ENCODE measurements at regions of chr13 and their contacts with region 1.

Region 1: GRCh38 chr13:73765651-73766384 is 368.4 kb downstream of the KLF12 start:
- DNase-seq: peak; percentile 85
- H3K4me3 Mint-ChIP-seq: peak overlapping the region; percentile 69
- H3K27ac Mint-ChIP-seq: peak overlapping the region; percentile 92
- H3K4me1 Mint-ChIP-seq: peaks cover 66% of the 10 kb centered on the region
- H3K27me3 Mint-ChIP-seq: no peaks in the 10 kb centered on the region

Region 2: DNA sequence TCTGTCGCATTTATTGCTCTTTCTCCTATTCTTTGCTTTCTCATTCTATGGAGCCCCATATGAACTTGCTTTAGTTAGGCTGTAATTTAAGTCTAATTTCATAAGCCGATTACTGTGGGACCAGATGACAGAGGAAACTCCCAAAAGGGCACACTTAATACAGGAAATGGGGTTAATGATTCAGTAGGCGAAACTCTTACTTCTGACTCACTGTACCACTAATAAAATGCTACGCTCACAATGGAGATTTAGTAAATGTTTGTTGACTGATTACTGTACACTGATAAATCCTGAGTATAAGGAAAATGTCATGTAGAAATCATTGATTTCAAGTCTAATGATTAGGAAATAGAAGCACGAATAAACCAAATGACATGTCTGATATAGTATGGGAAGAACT is 430.6 kb before region 1 on chr13:
- CTCF ChIA-PET with region 1: no interaction called
- POLR2A ChIA-PET with region 1: no interaction called
- intact Hi-C with region 1: loop called (anchors 5 kb)
- DNase-seq: no peak
- H3K4me3 Mint-ChIP-seq: no peak overlapping the region
- H3K27ac Mint-ChIP-seq: no peak overlapping the region
- H3K4me1 Mint-ChIP-seq: peaks cover 13% of the 10 kb centered on the region
- H3K27me3 Mint-ChIP-seq: no peaks in the 10 kb centered on the region

Region 3: DNA sequence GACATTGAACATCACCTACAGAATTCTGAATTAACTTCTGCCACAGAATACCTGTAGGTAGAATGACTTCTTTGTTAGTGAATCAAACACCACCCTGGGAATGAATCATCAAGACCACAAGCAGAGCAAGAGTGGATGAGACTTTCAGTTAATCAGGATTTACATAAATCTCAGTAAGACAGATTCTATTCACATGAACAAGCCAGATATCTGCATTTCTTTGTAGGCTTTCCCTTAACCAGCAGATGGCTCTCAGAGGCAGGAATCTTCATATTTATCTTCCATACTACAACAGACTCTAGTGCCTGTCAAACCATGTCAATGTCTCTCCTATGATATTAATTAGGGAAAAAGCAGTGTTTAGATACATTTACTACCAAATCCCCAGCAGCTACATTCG is 43.7 kb before region 1 on chr13:
- CTCF ChIA-PET with region 1: interaction called, 6 read pairs
- POLR2A ChIA-PET with region 1: interaction called, 3 read pairs
- intact Hi-C with region 1: loop called (anchors 1 kb)
- DNase-seq: no peak
- H3K4me3 Mint-ChIP-seq: no peak overlapping the region
- H3K27ac Mint-ChIP-seq: no peak overlapping the region
- H3K4me1 Mint-ChIP-seq: peaks cover 37% of the 10 kb centered on the region
- H3K27me3 Mint-ChIP-seq: no peaks in the 10 kb centered on the region

Region 4: GRCh38 chr13:73754727-73755292 is 11.0 kb before region 1 on chr13:
- CTCF ChIA-PET with region 1: interaction called, 10 read pairs
- POLR2A ChIA-PET with region 1: no interaction called
- intact Hi-C with region 1: no loop called
- DNase-seq: no peak
- H3K4me3 Mint-ChIP-seq: no peak overlapping the region
- H3K27ac Mint-ChIP-seq: no peak overlapping the region
- H3K4me1 Mint-ChIP-seq: peaks cover 30% of the 10 kb centered on the region
- H3K27me3 Mint-ChIP-seq: no peaks in the 10 kb centered on the region

Region 5: DNA sequence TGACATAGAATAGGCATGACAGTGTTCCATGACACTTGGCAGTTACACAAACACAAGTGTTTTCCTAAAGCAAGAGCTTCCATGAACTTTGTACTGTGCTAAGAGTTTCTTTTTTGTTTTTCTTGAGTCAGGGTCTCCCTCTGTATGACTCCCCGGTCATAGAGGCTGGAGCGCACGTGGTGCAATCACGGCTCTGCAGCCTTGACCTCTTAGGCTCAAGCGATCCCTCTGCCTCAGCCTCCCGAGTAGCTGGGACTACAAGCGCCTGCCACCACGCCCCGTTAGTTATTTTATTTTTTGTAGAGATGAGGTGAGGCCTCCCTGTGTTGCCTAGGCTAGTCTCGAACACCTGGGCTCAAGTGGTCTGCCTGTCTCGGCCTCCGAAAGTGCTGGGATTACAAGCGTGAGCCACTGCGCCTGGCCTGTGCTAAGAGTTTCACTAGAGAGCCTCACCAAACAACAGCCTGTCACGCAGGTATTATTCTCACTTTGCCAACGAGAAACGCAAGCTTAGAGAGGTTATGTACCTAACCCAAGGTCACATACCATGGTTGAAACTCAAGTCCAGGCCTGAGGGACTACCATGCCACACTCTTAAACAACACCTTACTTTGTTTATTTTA is 12.5 kb after region 1 on chr13:
- CTCF ChIA-PET with region 1: interaction called, 10 read pairs
- POLR2A ChIA-PET with region 1: interaction called, 3 read pairs
- intact Hi-C with region 1: no loop called
- DNase-seq: no peak
- H3K4me3 Mint-ChIP-seq: no peak overlapping the region
- H3K27ac Mint-ChIP-seq: no peak overlapping the region
- H3K4me1 Mint-ChIP-seq: peaks cover 23% of the 10 kb centered on the region
- H3K27me3 Mint-ChIP-seq: no peaks in the 10 kb centered on the region

Region 6: GRCh38 chr13:73880365-73880764 is 114.5 kb after region 1 on chr13:
- CTCF ChIA-PET with region 1: no interaction called
- POLR2A ChIA-PET with region 1: no interaction called
- intact Hi-C with region 1: no loop called
- DNase-seq: no peak
- H3K4me3 Mint-ChIP-seq: no peak overlapping the region
- H3K27ac Mint-ChIP-seq: no peak overlapping the region
- H3K4me1 Mint-ChIP-seq: peaks cover 48% of the 10 kb centered on the region
- H3K27me3 Mint-ChIP-seq: no peaks in the 10 kb centered on the region

Region 7: GRCh38 chr13:73984949-73985691 is 219.3 kb after region 1 on chr13:
- CTCF ChIA-PET with region 1: no interaction called
- POLR2A ChIA-PET with region 1: no interaction called
- intact Hi-C with region 1: loop called (anchors 2 kb)
- DNase-seq: peak; percentile 89
- H3K4me3 Mint-ChIP-seq: peak overlapping the region; percentile 63
- H3K27ac Mint-ChIP-seq: peak overlapping the region; percentile 90
- H3K4me1 Mint-ChIP-seq: peaks cover 46% of the 10 kb centered on the region
- H3K27me3 Mint-ChIP-seq: no peaks in the 10 kb centered on the region

Region 8: GRCh38 chr13:74230984-74231501 is 465.2 kb after region 1 on chr13:
- CTCF ChIA-PET with region 1: no interaction called
- POLR2A ChIA-PET with region 1: no interaction called
- intact Hi-C with region 1: loop called (anchors 5 kb)
- DNase-seq: no peak
- H3K4me3 Mint-ChIP-seq: peak overlapping the region; percentile 31
- H3K27ac Mint-ChIP-seq: peak overlapping the region; percentile 88
- H3K4me1 Mint-ChIP-seq: peaks cover 45% of the 10 kb centered on the region
- H3K27me3 Mint-ChIP-seq: no peaks in the 10 kb centered on the region

Measured in activated CD4-positive, alpha-beta memory T cell treated with anti-CD3 and anti-CD28 coated beads for 36 hours (primary cell).